ENCODE measurements at regions of chr2 and their contacts with region 1.

Region 1: GRCh38 chr2:88307817-88308216 is 137.7 kb downstream of the THNSL2 start:
- H3K4me3 Mint-ChIP-seq: no peak overlapping the region
- H3K27ac Mint-ChIP-seq: no peak overlapping the region
- H3K4me1 Mint-ChIP-seq: no peaks in the 10 kb centered on the region
- H3K27me3 Mint-ChIP-seq: peaks cover 4% of the 10 kb centered on the region

Region 2: DNA sequence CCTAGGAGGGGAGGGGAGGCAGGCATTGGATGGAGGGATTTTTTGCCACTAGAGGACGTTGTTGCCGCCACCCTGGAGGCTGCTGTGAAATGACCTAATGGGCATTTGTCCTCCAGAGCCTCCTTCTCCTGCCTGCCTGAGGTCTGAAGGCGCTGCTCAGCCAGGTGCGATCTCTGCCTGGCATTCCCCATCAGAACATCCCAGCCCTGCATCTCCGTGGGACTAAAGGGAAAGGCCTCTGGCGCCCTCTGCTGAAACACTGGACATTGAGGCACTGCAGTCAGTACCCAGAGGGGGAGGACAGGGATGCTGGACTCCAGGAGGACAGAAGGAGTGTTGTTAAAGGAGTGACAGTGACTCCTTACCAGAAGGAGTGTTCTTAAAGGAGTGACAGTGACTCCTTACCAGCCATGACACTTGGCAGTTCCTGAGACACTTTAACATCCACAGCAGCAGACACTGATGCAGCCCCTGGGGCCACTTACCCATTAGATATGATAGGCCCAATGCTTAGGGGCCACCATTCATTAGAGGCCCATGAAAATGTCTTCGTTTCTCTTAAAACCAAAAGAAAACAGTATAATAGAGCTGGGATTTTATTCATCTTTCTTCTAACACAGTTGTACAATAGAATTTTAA is 120.7 kb before region 1 on chr2:
- intact Hi-C with region 1: loop called (anchors 1 kb)
- H3K4me3 Mint-ChIP-seq: no peak overlapping the region
- H3K27ac Mint-ChIP-seq: no peak overlapping the region
- H3K4me1 Mint-ChIP-seq: peaks cover 11% of the 10 kb centered on the region
- H3K27me3 Mint-ChIP-seq: peaks cover 8% of the 10 kb centered on the region

Measured in dendritic cell treated with granulocyte-macrophage colony-stimulating factor and Interleukin-4, amounts not matched to agents 40 ng/mL and 50 ng/mL, for 4 days (primary cell).